H1 (cell line): ENCODE measurements at regions of chr11 and their contacts with region 1.

Region 1: GRCh38 chr11:79287952-79288351 is 152.9 kb downstream of the TENM4 start:
- DNase-seq: no peak
- H3K4me3 ChIP-seq: no peak overlapping the region
- H3K27ac ChIP-seq: no peak overlapping the region
- H3K4me1 ChIP-seq: no peaks in the 10 kb centered on the region
- H3K27me3 ChIP-seq: no peaks in the 10 kb centered on the region
- CTCF ChIP-seq: no peak
- EP300 ChIP-seq: no peak
- POLR2A ChIP-seq: no peak
- RAD21 ChIP-seq: no peak

Region 2: DNA sequence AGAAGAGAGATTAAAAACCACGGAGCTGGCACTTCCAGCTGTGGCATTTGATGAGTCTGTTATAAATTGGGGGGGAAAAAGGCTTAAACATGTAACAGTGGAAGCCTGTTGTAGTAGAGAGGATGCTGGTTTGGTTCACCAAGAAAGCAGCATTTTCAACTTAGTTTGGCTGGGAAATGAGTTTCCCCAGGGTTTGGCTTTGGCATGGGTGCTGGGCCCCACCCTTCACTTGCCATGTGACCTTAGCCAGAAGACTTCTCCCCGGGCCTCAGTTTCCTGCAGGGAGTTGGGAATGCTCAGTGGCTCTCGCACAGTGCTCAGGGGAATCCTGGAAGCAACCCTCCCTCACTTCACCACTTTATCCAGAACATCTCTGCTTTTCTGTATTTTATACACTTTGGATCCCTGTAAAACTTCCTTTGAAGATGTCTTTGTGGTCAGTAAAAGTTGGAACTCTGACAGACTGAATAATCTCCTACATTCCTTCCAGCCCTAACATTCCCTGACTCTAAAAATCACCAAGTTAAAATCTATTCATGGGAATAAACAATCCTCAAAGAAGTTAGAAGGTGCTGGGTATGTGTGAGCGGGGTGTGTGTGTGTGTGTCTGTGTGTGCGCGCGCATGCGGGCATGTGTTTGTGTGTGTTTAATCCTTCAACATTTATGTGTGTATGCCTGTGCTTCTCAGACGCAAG is 13.2 kb before region 1 on chr11:
- CTCF ChIA-PET with region 1: interaction called, 12 read pairs
- POLR2A ChIA-PET with region 1: interaction called, 3 read pairs
- DNase-seq: no peak
- H3K4me3 ChIP-seq: no peak overlapping the region
- H3K27ac ChIP-seq: no peak overlapping the region
- H3K4me1 ChIP-seq: peaks cover 0 to 5% (median 3%) of the 10 kb centered on the region in 4 experiments; a peak in 5 of 7 replicates
- H3K27me3 ChIP-seq: no peaks in the 10 kb centered on the region
- CTCF ChIP-seq: no peak
- EP300 ChIP-seq: no peak
- POLR2A ChIP-seq: no peak
- RAD21 ChIP-seq: no peak